ENCODE measurements at regions of chr10 and their contacts with region 1.

Region 1: DNA sequence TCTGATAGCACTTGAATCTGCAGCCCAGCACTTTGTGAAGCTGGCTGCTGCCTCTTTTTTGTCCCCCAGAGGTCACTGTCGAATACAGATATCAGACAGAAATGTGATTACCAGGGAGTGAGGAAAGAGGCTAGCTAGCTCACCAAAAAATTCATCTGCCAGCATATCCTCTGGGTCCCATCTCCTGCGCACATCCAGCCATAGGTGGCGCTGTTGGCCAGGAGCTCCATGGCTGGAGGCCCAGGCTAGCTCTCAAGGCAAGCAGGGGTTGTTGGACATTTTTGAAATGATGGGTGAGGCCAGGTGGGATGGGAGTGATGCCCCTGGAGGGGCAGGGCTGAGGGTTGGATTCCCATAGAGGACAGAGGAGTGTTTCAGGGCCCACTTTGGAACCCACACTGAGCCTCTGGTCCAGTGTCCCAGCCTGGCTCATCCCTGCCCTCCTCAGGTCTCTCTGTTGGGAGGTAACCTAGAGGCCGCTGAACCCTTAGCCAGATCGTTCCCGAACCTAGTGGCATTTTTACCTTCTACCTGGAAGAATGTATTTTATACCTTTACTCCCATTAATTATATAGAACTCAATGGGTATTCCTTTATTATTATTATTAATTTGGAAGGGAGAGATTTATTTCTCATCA is 14.8 kb downstream of the DPCD start:
- DNase-seq: peak; percentile 40
- ATAC-seq: peak; percentile 100
- H3K4me3 ChIP-seq: no peak overlapping the region
- H3K27ac ChIP-seq: no peak overlapping the region
- H3K4me1 ChIP-seq: no peaks in the 10 kb centered on the region
- H3K27me3 ChIP-seq: no peaks in the 10 kb centered on the region
- CTCF ChIP-seq: peak; percentile 93 to 98 (median 96); a peak in 5 of 6 replicates
- EP300 ChIP-seq: no peak
- POLR2A ChIP-seq: no peak
- RAD21 ChIP-seq: peak; percentile 94

Region 2: DNA sequence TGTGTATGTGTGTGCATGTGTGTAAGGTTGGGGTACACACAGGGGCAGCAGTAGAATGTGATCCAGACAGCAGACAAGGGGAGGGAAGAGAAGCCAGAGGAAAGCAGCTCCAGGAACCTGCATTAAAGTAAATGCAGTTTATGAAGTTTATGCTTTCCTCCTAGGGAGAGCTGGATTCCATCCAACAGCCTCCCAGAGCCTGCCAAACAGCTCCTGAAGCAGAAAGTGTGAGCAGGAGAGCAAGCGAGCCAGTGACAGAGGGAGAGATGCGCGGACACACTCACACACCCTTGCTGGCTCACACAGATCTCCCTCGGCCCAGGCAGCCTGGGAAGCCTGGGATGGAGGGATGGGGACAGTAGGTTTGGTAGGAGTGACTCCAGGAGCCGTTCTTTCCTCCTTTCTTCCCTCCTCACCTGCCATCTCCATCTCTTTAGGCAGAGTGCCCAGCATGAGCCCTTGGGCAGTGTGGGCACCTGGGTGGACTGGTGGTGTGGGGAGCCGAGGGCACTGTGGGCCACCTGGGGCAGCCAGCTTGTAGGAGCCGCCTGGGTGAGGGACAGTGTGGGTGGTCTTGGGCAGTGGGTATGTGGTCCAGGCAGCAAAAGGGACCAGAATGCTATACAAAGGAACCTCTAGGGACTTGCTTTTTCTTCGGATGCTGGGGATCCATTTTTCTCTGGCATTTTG is 811.4 kb before region 1 on chr10:
- CTCF ChIA-PET with region 1: no interaction called
- POLR2A ChIA-PET with region 1: no interaction called
- RAD21 ChIA-PET with region 1: no interaction called
- SMC1A ChIA-PET with region 1: no interaction called
- in situ Hi-C with region 1: no loop called
- intact Hi-C with region 1: no loop called
- DNase-seq: no peak
- ATAC-seq: no peak
- H3K4me3 ChIP-seq: no peak overlapping the region
- H3K27ac ChIP-seq: no peak overlapping the region
- H3K4me1 ChIP-seq: no peaks in the 10 kb centered on the region
- H3K27me3 ChIP-seq: peaks cover 4 to 5% of the 10 kb centered on the region in 2 experiments
- CTCF ChIP-seq: no peak
- EP300 ChIP-seq: no peak
- POLR2A ChIP-seq: no peak
- RAD21 ChIP-seq: no peak

Region 3: DNA sequence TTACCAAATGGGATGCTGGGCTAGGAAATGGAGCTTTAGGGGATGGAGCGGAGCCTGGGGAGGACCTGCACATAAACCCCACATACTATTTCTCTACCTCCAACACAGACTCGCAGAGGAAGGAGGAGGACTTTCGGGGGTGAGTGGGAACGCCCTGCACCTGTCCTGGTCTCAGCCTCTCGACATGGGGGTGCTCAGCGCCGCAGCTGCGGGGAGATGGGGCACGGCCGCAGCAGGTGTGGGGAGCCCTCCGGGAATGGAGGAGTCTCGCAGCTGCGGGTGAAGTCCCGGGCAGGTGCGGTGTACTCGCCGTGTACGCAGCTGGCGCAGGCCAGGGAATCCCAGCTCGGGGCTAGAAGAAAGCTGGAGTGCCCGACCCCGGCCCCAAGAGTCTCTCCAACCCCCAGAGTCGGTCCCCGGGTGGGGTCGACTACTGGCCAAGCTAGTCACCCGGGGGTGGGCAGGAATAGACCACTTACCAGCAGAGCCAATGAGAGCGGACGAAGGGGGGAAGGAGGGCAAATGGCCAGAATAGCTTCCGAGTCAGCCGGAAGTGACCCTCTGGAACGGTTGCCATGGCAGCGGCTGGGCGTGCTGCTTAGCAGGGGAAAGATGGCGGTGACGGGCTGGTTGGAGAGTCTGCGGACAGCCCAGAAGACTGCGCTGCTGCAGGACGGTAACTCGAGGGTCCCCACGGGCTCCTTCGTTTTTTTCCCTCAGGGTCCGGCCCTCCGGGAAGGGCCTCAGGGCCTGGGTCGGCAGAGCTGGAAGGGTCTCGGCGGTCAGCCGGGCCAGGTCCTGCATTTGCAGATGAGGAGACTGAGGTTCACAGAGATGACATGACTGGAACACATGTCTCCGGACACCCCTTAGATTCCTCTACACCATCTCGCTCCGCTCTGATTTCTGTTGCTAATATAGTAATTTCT is 14.9 kb before region 1 on chr10 and contains the starts of genes DPCD and POLL:
- CTCF ChIA-PET with region 1: interaction called, 10 read pairs
- POLR2A ChIA-PET with region 1: interaction called, 3 read pairs
- RAD21 ChIA-PET with region 1: interaction called, 7 read pairs
- SMC1A ChIA-PET with region 1: interaction called, 3 read pairs
- in situ Hi-C with region 1: no loop called
- intact Hi-C with region 1: no loop called
- DNase-seq: peak; percentile 71
- ATAC-seq: peak; percentile 99
- H3K4me3 ChIP-seq: peak within 1 kb of the TSS; percentile 79
- H3K27ac ChIP-seq: peak within 1 kb of the TSS; percentile 76
- H3K4me1 ChIP-seq: peaks cover 4% of the 10 kb centered on the region; the same call in 1 of the 2 replicates
- H3K27me3 ChIP-seq: no peaks in the 10 kb centered on the region
- CTCF ChIP-seq: no peak
- EP300 ChIP-seq: 0 out of 4 replicates have a peak, but pooled peaks of 1 of the 2 experiments have one; percentile 12
- POLR2A ChIP-seq: peak; percentile 70
- RAD21 ChIP-seq: no peak
- polyA plus RNA-seq, gene DPCD: 39.9 to 50.9 TPM
- polyA plus RNA-seq, gene POLL: 1.5 to 2.1 TPM

Region 4: DNA sequence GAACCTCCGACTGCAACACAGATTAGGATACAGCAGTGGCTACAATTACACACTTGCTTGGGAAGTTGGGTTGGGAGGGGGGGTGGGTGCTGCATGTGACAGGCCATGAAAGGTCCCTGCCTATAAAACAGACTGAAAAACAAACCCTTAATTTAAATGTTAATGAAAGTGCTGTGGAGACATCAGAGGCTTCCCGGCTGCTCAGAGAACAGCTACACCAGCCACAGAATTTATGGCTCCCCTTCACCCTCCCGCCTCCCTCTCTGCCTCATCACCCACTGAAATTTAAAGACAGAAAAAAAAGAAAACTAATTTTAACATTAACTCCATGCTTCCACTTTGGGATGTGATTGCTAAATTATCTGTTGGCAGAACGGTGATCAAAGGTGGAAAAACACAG is 57.4 kb after region 1 on chr10:
- CTCF ChIA-PET with region 1: interaction called, 14 read pairs
- POLR2A ChIA-PET with region 1: no interaction called
- RAD21 ChIA-PET with region 1: no interaction called
- SMC1A ChIA-PET with region 1: interaction called, 3 read pairs
- in situ Hi-C with region 1: no loop called
- intact Hi-C with region 1: no loop called
- DNase-seq: no peak
- ATAC-seq: no peak
- H3K4me3 ChIP-seq: no peak overlapping the region
- H3K27ac ChIP-seq: no peak overlapping the region
- H3K4me1 ChIP-seq: no peaks in the 10 kb centered on the region
- H3K27me3 ChIP-seq: no peaks in the 10 kb centered on the region
- CTCF ChIP-seq: no peak
- EP300 ChIP-seq: no peak
- POLR2A ChIP-seq: no peak
- RAD21 ChIP-seq: no peak

Region 5: GRCh38 chr10:101718690-101719275 is 115.9 kb after region 1 on chr10:
- CTCF ChIA-PET with region 1: interaction called, 16 read pairs
- POLR2A ChIA-PET with region 1: no interaction called
- RAD21 ChIA-PET with region 1: interaction called, 7 read pairs
- SMC1A ChIA-PET with region 1: interaction called, 3 read pairs
- in situ Hi-C with region 1: no loop called
- intact Hi-C with region 1: no loop called
- DNase-seq: no peak
- ATAC-seq: no peak
- H3K4me3 ChIP-seq: no peak overlapping the region
- H3K27ac ChIP-seq: no peak overlapping the region
- H3K4me1 ChIP-seq: no peaks in the 10 kb centered on the region
- H3K27me3 ChIP-seq: no peaks in the 10 kb centered on the region
- CTCF ChIP-seq: no peak
- EP300 ChIP-seq: no peak
- POLR2A ChIP-seq: no peak
- RAD21 ChIP-seq: no peak

Region 6: GRCh38 chr10:102072673-102073527 is 470.0 kb after region 1 on chr10:
- CTCF ChIA-PET with region 1: interaction called, 6 read pairs
- POLR2A ChIA-PET with region 1: no interaction called
- RAD21 ChIA-PET with region 1: interaction called, 4 read pairs
- SMC1A ChIA-PET with region 1: interaction called, 4 read pairs
- in situ Hi-C with region 1: loop called (anchors 5 kb)
- intact Hi-C with region 1: loop called (anchors 2 kb)
- DNase-seq: no peak
- ATAC-seq: peak; percentile 99
- H3K4me3 ChIP-seq: no peak overlapping the region
- H3K27ac ChIP-seq: no peak overlapping the region
- H3K4me1 ChIP-seq: no peaks in the 10 kb centered on the region
- H3K27me3 ChIP-seq: no peaks in the 10 kb centered on the region
- CTCF ChIP-seq: peak; percentile 94 to 96 (median 95)
- EP300 ChIP-seq: no peak
- POLR2A ChIP-seq: no peak
- RAD21 ChIP-seq: peak; percentile 92

Measured in GM12878 (cell line).